RWPE1 (cell line): ENCODE measurements at regions of chr9 and their contacts with region 1.

Region 1: DNA sequence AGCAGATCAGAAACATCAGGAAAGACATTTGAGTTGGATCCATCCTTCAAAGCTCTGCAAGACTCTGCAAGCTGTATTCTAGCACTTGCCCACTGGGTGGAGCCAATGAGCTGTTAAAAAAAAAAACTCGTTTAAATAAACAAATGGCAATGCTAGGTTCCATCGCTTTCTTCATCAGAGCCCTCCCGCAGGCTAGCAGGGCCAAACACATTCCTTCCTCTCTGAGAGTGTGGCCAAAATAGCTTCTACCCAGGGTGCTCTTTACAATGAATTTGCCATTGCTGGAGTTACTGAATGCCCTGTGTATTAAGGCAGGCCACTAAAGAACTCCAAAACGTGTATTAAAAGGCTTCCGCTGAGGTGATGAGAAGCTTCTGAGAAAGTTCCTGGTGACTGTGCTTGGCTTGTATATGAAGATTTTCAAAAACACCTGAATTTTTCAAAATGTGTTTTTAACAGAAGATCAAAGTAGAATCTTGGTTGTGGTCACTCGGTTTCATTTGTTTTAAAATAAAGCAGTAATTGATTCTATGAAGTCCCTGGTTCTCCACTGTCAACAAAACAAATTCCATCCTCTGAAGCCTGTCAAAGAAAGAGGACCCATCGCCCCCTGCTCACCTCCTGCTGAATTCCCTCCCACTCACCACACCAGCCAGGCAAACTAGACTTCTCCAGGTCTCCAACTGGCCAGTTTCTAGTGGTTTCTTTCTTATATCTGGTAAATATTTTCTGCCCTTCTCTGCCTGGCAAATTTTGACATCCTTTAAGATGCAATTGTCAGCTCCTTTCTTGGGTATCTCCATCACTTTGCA is 36.5 kb upstream of the EQTN start:
- DNase-seq: peak; percentile 68
- H3K27ac ChIP-seq: no peak overlapping the region
- CTCF ChIP-seq: peak; percentile 92

Region 2: DNA sequence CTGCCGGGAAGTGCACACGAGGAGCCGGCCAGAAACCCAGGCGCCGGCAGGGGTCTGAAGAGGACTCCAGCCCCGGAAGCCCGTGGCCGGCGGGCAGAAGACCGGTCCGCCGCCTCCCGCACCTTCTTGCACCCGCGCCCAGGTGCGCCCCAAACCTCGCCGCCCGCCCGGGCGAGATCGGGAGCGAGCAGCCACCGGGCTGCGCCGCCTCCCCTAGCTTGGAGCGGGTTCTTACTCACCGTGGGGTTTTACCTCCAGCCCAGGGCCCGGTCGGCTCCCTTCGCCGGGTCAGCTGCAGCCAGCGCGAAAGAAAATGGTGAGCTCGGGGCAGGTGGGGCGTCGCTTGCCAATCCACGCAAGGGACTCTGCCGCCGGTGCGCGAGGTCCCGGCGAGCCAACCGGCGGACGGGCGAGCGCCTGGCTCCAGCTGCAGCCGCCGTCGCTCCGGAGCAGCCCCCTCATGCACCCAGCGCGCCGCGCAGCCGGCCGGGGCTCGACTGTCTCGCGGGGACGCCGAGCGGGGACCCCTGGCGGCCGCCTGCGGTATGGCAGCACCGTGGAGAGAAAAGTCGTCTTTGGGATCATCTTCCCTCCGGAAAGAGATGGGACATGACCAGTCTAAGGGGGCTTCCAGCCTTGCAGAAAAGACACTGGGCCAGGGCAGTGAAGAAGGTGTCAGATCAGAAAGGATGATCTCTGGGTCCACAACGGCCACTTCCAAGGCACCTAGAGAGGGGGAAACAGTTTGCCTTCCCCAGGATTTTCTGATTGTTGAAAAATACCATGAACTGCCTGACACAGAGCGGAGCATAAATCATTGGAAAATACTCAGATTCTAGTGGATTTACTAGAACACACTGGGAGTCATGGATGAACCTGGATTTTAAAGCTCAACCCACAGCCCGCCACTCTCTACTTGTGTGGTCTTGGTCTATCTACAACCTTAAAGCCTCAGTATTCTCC is 196.2 kb after region 1 on chr9 and contains the start of gene MOB3B:
- CTCF ChIA-PET with region 1: interaction called, 17 read pairs
- POLR2A ChIA-PET with region 1: no interaction called
- DNase-seq: peak; percentile 79
- H3K27ac ChIP-seq: peak within 1 kb of the TSS; percentile 97
- CTCF ChIP-seq: peak; percentile 98

Region 3: GRCh38 chr9:27548055-27548741 is 214.8 kb after region 1 on chr9:
- CTCF ChIA-PET with region 1: interaction called, 32 read pairs
- POLR2A ChIA-PET with region 1: no interaction called
- DNase-seq: peak; percentile 45
- H3K27ac ChIP-seq: no peak overlapping the region
- CTCF ChIP-seq: peak; percentile 70